ENCODE measurements at regions of chr20 and their contacts with region 1.

Region 1: GRCh38 chr20:18632196-18633009 is 44.5 kb downstream of the DTD1 start:
- DNase-seq: peak; percentile 71
- H3K4me3 ChIP-seq: no peak overlapping the region
- H3K27ac ChIP-seq: no peak overlapping the region
- H3K4me1 ChIP-seq: no peaks in the 10 kb centered on the region
- CTCF ChIP-seq: peak; percentile 98

Region 2: GRCh38 chr20:18613556-18613955 is 18.8 kb before region 1 on chr20:
- CTCF ChIA-PET with region 1: no interaction called
- POLR2A ChIA-PET with region 1: no interaction called
- intact Hi-C with region 1: no loop called
- DNase-seq: no peak
- H3K4me3 ChIP-seq: no peak overlapping the region
- H3K27ac ChIP-seq: no peak overlapping the region
- H3K4me1 ChIP-seq: no peaks in the 10 kb centered on the region
- CTCF ChIP-seq: 0 out of 2 replicates have a peak, but pooled peaks have one; percentile 19

Region 3: DNA sequence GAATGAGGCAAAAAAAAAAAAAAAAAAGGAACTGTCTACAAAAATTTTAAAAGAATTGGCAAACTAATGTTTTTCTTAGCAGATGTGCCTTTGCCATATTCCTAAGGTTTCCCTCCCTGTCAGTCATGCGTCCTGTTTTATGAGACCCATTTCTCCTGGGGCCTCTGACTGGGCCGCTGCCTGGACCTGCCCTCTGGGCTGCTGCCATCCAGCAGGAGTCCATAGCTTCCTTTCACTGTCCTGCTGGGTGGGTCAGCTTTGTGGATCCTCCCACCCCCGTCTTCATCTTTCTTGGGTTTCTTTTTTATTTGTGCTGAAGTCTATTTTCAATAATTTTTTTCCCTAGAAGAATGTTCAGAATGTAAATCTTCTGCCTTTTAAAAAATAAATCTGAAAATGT is 70.3 kb after region 1 on chr20:
- CTCF ChIA-PET with region 1: no interaction called
- POLR2A ChIA-PET with region 1: no interaction called
- intact Hi-C with region 1: no loop called
- DNase-seq: no peak
- H3K4me3 ChIP-seq: no peak overlapping the region
- H3K27ac ChIP-seq: no peak overlapping the region
- H3K4me1 ChIP-seq: no peaks in the 10 kb centered on the region
- CTCF ChIP-seq: no peak

Region 4: GRCh38 chr20:18793625-18794427 is 161.4 kb after region 1 on chr20:
- CTCF ChIA-PET with region 1: no interaction called
- POLR2A ChIA-PET with region 1: no interaction called
- intact Hi-C with region 1: loop called (anchors 5 kb)
- DNase-seq: peak; percentile 94
- H3K4me3 ChIP-seq: peak overlapping the region; percentile 77
- H3K27ac ChIP-seq: no peak overlapping the region
- H3K4me1 ChIP-seq: peaks cover 5% of the 10 kb centered on the region
- CTCF ChIP-seq: peak; percentile 51

Region 5: GRCh38 chr20:19185090-19185489 is 552.7 kb after region 1 on chr20:
- CTCF ChIA-PET with region 1: no interaction called
- POLR2A ChIA-PET with region 1: no interaction called
- intact Hi-C with region 1: loop called (anchors 10 kb)
- DNase-seq: no peak
- H3K4me3 ChIP-seq: no peak overlapping the region
- H3K27ac ChIP-seq: no peak overlapping the region
- H3K4me1 ChIP-seq: no peaks in the 10 kb centered on the region
- CTCF ChIP-seq: no peak

Measured in OCI-LY7 (cell line).